Activated CD4-positive, alpha-beta memory T cell treated with anti-CD3 and anti-CD28 coated beads for 36 hours (primary cell): ENCODE measurements at regions of chr14 and their contacts with region 1.

Region 1: GRCh38 chr14:24195191-24196070 is at the start of gene TM9SF1:
- DNase-seq: peak; percentile 91
- H3K4me3 Mint-ChIP-seq: peak within 1 kb of the TSS; percentile 96
- H3K27ac Mint-ChIP-seq: peak within 1 kb of the TSS; percentile 95
- H3K4me1 Mint-ChIP-seq: peaks cover 55% of the 10 kb centered on the region
- H3K27me3 Mint-ChIP-seq: no peaks in the 10 kb centered on the region
- total RNA-seq, gene TM9SF1: 23.7 to 26.7 TPM

Region 2: DNA sequence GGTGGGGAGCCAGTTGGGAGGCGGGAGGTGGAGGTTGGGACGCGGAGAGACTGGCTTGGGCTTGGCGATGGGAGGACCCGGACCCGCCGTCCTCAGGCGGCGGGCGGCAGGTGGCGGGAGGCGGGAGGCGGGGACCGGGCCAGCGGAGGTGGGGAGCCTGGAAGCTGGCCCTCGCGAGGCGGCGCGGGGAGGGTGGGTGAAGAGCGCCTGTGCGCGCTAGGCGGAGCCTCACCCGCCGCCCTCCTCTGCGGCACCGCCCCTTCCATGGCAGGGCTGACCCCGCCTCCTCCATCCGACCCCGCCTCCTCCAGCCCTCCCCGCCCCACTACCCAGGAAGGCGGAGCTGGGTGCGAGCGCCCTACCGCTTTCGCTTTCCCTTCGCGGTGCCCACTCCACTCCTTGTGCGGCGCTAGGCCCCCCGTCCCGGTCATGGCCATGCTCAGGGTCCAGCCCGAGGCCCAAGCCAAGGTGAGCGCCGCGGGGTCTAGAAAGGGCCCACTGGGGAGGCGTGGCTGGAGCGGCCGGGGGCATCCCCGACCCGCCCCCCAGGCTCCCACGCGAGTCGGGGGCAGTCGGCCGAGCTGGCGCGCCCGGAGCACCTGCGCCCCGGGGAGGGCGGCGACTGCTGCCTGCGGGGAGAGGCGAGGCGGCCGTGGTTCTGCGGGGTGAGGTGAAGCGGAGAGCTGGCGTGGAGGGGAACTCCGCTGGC is 59.4 kb before region 1 on chr14 and contains the start of gene PSME1:
- CTCF ChIA-PET with region 1: no interaction called
- POLR2A ChIA-PET with region 1: interaction called, 13 read pairs
- intact Hi-C with region 1: loop called (anchors 1 kb)
- DNase-seq: peak; percentile 97
- H3K4me3 Mint-ChIP-seq: peak within 1 kb of the TSS; percentile 95
- H3K27ac Mint-ChIP-seq: peak within 1 kb of the TSS; percentile 96
- H3K4me1 Mint-ChIP-seq: peaks cover 54% of the 10 kb centered on the region
- H3K27me3 Mint-ChIP-seq: no peaks in the 10 kb centered on the region
- total RNA-seq, gene PSME1: 403 to 427 TPM

Region 3: GRCh38 chr14:24141097-24141880 is 54.1 kb before region 1 on chr14 and contains the start of gene EMC9:
- CTCF ChIA-PET with region 1: interaction called, 3 read pairs
- POLR2A ChIA-PET with region 1: interaction called, 18 read pairs
- intact Hi-C with region 1: loop called (anchors 1 kb)
- DNase-seq: peak; percentile 100
- H3K4me3 Mint-ChIP-seq: peak within 1 kb of the TSS; percentile 97
- H3K27ac Mint-ChIP-seq: peak within 1 kb of the TSS; percentile 94
- H3K4me1 Mint-ChIP-seq: peaks cover 65% of the 10 kb centered on the region
- H3K27me3 Mint-ChIP-seq: no peaks in the 10 kb centered on the region
- total RNA-seq, gene EMC9: 40.0 to 40.9 TPM

Region 4: GRCh38 chr14:24207104-24207551 is 11.7 kb after region 1 on chr14:
- CTCF ChIA-PET with region 1: interaction called, 3 read pairs
- POLR2A ChIA-PET with region 1: interaction called, 14 read pairs
- intact Hi-C with region 1: no loop called
- DNase-seq: no peak
- H3K4me3 Mint-ChIP-seq: no peak overlapping the region
- H3K27ac Mint-ChIP-seq: peak overlapping the region; percentile 5
- H3K4me1 Mint-ChIP-seq: peaks cover 31% of the 10 kb centered on the region
- H3K27me3 Mint-ChIP-seq: no peaks in the 10 kb centered on the region